ENCODE measurements at regions of chr7 and their contacts with region 1.

Region 1: DNA sequence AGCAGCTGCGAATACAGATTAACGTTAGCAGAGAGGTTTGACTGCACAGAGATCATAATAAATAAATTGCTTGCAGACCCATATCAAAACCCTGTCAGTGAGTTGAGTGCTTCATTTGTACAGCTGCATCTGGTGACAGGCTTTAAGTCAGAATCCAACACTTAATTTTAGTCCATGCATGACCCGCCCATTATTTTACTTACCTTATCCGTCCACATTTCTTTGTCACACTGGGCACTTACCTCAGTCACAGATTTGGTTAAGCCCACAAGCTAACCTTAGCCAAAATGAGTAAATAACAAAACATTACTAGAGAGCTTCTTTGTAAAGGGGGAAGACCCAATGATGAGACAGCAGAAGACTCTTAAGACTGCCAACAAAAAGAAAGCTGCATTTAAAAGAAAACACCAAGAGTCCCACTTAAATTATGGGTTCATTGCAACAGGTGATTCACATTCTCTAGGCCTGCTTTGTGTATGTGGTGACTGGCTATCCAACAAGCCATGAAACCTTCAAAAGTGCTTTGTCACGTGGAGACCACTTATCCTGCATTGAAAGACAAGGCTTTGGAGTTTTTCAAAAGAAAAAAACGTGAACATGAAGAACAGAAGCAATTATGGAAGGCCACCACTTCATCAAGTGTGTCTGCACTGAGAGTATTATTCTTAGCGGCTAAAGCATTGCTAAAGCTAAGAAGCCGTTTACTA is 32.2 kb downstream of the PHTF2 start:
- DNase-seq: no peak
- ATAC-seq: no peak
- H3K4me3 Mint-ChIP-seq: no peak overlapping the region
- H3K27ac Mint-ChIP-seq: peak overlapping the region; percentile 71
- H3K4me1 Mint-ChIP-seq: peaks cover 58% of the 10 kb centered on the region
- H3K27me3 Mint-ChIP-seq: no peaks in the 10 kb centered on the region

Region 2: GRCh38 chr7:77619314-77619713 is 211.5 kb before region 1 on chr7:
- CTCF ChIA-PET with region 1: no interaction called
- POLR2A ChIA-PET with region 1: no interaction called
- intact Hi-C with region 1: no loop called
- DNase-seq: no peak
- ATAC-seq: no peak
- H3K4me3 Mint-ChIP-seq: no peak overlapping the region
- H3K27ac Mint-ChIP-seq: no peak overlapping the region
- H3K4me1 Mint-ChIP-seq: peaks cover 5% of the 10 kb centered on the region
- H3K27me3 Mint-ChIP-seq: no peaks in the 10 kb centered on the region

Region 3: GRCh38 chr7:77881871-77882270 is 51.1 kb after region 1 on chr7:
- CTCF ChIA-PET with region 1: no interaction called
- POLR2A ChIA-PET with region 1: no interaction called
- intact Hi-C with region 1: loop called in 1 of 2 experiments (anchors 5 kb)
- DNase-seq: no peak
- ATAC-seq: no peak
- H3K4me3 Mint-ChIP-seq: no peak overlapping the region
- H3K27ac Mint-ChIP-seq: no peak overlapping the region
- H3K4me1 Mint-ChIP-seq: peaks cover 17% of the 10 kb centered on the region
- H3K27me3 Mint-ChIP-seq: no peaks in the 10 kb centered on the region

Region 4: DNA sequence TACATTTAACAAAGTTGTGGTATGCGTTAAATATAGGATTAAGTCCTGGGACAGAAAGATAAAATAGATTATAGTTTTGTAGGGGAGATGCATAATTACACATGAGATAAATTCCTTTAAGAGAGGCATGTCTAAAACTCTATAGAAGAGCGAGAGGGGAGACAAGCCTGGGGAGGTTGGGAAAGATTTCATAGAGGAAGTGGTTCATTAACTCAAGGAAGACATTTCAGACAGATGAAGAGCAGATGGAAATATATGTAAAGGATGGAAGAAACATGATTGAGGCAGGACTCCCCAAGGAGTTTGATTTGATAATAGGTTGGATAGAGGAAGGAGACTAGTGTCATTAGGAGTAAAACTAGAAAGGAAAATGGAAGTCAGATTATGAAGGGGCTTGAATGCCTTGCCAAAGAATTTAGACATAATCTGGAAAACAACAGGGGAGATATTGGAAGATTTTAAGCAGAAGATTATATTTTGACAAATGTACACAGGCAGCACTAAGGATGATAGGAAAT is 63.8 kb after region 1 on chr7:
- CTCF ChIA-PET with region 1: no interaction called
- POLR2A ChIA-PET with region 1: no interaction called
- intact Hi-C with region 1: no loop called
- DNase-seq: no peak
- ATAC-seq: no peak
- H3K4me3 Mint-ChIP-seq: no peak overlapping the region
- H3K27ac Mint-ChIP-seq: no peak overlapping the region
- H3K4me1 Mint-ChIP-seq: peaks cover 4% of the 10 kb centered on the region
- H3K27me3 Mint-ChIP-seq: no peaks in the 10 kb centered on the region

Region 5: GRCh38 chr7:78450706-78451105 is 619.9 kb after region 1 on chr7:
- CTCF ChIA-PET with region 1: no interaction called
- POLR2A ChIA-PET with region 1: no interaction called
- intact Hi-C with region 1: no loop called
- DNase-seq: no peak
- ATAC-seq: no peak
- H3K4me3 Mint-ChIP-seq: no peak overlapping the region
- H3K27ac Mint-ChIP-seq: no peak overlapping the region
- H3K4me1 Mint-ChIP-seq: no peaks in the 10 kb centered on the region
- H3K27me3 Mint-ChIP-seq: no peaks in the 10 kb centered on the region

Region 6: DNA sequence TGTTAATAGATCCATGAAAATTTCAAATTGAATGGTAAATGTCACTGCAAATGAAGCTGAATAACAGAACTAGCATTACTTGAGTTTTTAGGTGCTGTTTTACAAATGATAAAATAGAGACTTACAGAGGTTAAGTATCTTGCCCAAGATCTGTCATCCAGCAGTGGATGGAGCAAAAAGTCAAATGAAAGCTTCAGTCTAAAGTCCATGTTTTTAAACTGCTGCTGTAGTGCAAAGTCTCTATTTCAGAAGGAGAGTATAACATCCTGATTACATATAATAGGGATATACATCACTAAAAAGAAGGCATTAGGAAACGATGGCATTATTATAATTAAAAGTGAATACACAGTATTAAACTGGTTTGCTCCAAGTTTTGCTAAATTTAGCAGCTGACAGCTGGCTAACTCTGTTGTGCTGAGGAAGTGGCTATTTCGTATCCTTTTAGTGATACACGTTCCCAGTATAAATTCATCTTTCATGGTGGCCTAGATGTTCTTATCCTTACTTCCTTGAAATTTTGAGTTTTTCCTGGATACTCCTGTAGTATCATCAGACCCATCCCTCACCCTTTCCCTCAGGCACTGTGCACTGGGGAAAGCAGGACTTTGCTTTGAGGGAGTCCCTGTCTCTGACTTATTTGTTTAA is 1019.4 kb after region 1 on chr7:
- CTCF ChIA-PET with region 1: no interaction called
- POLR2A ChIA-PET with region 1: no interaction called
- intact Hi-C with region 1: no loop called
- DNase-seq: no peak
- ATAC-seq: no peak
- H3K4me3 Mint-ChIP-seq: no peak overlapping the region
- H3K27ac Mint-ChIP-seq: no peak overlapping the region
- H3K4me1 Mint-ChIP-seq: no peaks in the 10 kb centered on the region
- H3K27me3 Mint-ChIP-seq: no peaks in the 10 kb centered on the region

Measured in activated CD4-positive, alpha-beta T cell treated with anti-CD3 and anti-CD28 coated beads for 36 hours (primary cell).